Activated CD4-positive, alpha-beta T cell treated with anti-CD3 and anti-CD28 coated beads, Interleukin-2, amount 10 ng/mL, durations not matched to agents 7 days and 5 days (primary cell): ENCODE measurements at regions of chr14 and their contacts with region 1.

Region 1: GRCh38 chr14:69151315-69152049 is 1.4 kb downstream of the DCAF5 start:
- DNase-seq: peak; percentile 73
- H3K4me3 Mint-ChIP-seq: peak overlapping the region; percentile 83
- H3K27ac Mint-ChIP-seq: peak overlapping the region; percentile 95
- H3K4me1 Mint-ChIP-seq: peaks cover 43% of the 10 kb centered on the region
- H3K27me3 Mint-ChIP-seq: peaks cover 21% of the 10 kb centered on the region

Region 2: DNA sequence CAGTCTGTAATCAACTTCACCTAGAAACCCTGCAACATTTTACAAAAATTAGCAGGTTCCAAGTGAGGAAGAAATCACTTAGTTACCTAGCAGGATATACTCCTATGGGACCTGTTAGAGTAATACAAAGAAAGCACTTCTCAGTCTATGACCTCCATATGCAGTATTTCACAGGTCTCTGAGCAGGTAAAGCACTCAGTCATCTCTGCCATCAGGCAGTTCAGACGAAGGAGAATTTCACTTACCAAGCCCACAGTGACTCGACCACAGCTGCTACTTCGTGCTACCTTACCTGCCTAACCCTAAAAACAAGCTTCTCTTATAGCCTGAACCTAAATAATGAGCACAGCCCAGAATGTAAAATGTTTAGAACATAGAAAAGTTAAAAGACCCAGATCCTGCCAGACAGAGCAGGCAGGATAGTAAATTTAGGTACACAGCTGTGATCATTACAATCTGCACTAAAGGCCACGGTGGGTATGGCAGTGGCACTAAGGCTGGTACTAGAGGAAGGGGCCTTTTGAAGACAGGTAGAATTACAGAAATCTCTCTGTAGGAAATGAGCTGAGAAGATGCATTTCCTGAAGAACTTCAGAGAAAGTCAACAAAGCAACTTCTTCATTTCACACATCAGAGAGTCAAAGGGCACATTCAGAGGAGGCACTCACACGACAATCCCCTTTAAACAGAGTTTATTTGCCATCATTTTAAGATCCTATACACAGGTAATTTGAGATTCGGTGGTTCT is 34.3 kb before region 1 on chr14:
- CTCF ChIA-PET with region 1: no interaction called
- POLR2A ChIA-PET with region 1: no interaction called
- DNase-seq: no peak
- H3K4me3 Mint-ChIP-seq: no peak overlapping the region
- H3K27ac Mint-ChIP-seq: peak overlapping the region; percentile 76
- H3K4me1 Mint-ChIP-seq: peaks cover 35% of the 10 kb centered on the region
- H3K27me3 Mint-ChIP-seq: no peaks in the 10 kb centered on the region

Region 3: GRCh38 chr14:69133206-69134125 is 18.0 kb before region 1 on chr14:
- CTCF ChIA-PET with region 1: interaction called, 16 read pairs
- POLR2A ChIA-PET with region 1: interaction called, 3 read pairs
- DNase-seq: no peak
- H3K4me3 Mint-ChIP-seq: no peak overlapping the region
- H3K27ac Mint-ChIP-seq: no peak overlapping the region
- H3K4me1 Mint-ChIP-seq: peaks cover 46% of the 10 kb centered on the region
- H3K27me3 Mint-ChIP-seq: no peaks in the 10 kb centered on the region

Region 4: DNA sequence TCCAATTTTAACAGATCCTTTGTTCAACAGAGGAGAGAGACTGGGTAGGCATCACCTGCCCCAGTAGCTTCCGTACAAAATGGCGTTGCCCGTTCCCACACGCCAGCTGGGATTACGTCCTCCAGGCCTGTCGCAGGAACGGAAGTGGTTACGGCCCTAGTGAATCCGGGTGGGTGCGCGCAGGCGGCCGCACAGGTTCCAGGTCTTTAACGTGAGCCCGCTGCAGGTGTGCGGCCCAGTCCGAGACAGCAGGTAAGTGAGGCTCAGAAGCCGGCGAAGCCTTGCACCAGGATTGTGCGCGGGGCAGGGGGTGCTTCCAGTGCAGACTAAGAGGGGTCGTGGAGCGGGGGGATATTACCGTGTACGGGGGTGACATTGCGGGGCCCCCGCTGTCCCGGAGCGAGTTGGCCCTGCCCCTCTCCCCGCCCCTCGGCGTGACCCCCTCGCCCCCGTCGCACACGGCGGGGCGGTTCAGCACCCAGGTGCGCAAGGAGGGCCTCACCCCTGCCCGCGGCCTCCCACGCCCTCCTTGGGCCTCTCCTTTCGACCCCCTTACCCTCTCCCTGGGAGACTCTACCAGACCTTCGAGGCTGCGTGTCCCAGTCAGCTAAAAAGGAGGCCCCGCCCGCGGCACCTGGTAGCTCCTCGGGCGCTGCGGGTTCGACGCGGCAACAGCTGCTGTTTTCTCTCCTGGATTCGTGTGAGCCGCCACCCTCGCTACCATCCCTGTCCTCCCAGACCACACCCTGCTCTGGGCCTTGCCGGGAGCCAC is 40.0 kb after region 1 on chr14 and contains the start of gene EXD2:
- CTCF ChIA-PET with region 1: interaction called, 10 read pairs
- POLR2A ChIA-PET with region 1: no interaction called
- DNase-seq: peak; percentile 66
- H3K4me3 Mint-ChIP-seq: peak within 1 kb of the TSS; percentile 84
- H3K27ac Mint-ChIP-seq: peak within 1 kb of the TSS; percentile 89
- H3K4me1 Mint-ChIP-seq: peaks cover 31% of the 10 kb centered on the region
- H3K27me3 Mint-ChIP-seq: no peaks in the 10 kb centered on the region
- total RNA-seq, gene EXD2: 5.2 to 5.8 TPM